Heart right ventricle (tissue), 16 donors: ENCODE measurements at regions of chr3 and their contacts with region 1.

Region 1: DNA sequence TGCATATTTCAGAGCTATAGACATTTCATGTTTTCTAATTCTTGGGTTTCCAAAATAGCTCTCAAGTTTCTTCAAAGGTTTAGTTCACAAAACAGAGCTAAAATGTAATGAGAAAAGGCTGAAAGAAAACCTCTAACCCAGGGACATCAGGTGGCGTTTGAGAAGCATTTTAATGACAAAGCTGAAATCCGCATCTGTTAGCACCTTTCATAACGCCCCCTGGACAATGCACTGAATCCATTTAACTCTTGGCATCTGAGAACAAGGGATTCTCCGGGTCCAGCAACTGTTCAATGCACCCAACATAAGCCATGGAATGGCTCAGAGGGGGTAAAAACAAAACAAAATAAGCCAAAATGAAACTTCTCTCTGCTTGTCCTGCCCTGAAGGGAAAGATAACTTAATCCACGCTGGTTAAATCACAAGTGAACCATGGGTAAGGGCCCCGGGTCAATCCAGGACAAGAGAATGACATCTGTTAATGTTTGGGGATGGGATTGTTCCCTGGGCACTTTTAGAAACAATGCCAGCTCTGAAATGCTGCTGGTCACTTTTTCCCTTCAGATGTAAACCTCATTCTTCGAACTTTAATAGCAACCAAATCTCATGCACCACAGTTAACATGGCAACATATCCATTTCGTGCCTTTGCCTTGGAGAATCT is 466.2 kb upstream of the ADAMTS9 start:
- DNase-seq: no peak
- ATAC-seq: no peak
- H3K4me3 ChIP-seq: no peak overlapping the region
- H3K27ac ChIP-seq: no peak overlapping the region
- H3K4me1 ChIP-seq: no peaks in the 10 kb centered on the region
- H3K27me3 ChIP-seq: no peaks in the 10 kb centered on the region
- CTCF ChIP-seq: no peak

Region 2: DNA sequence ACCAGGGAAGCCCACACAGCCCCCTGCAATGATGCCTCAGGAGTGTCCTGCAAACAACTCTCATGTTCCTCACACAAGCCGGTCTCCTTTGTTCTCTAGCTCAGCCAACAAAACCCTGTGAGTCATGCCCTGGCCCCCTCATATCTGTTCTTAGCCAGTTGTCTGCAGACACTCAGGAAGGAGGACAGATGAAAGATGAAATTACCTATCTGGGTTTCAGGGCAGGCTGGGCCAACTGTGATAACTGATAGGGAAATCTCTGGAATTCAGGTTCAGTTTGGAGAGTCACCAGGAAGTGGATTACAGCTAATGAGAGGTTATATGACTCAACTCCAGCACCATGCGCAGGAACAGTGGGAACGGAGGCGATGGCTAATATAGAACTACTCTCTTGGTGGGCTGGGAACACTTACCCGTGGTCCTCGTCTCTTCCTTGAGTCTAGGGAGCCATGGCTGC is 114.2 kb before region 1 on chr3:
- intact Hi-C with region 1: loop called in 1 of 10 experiments (anchors 10 kb)
- DNase-seq: no peak
- ATAC-seq: no peak
- H3K4me3 ChIP-seq: no peak overlapping the region
- H3K27ac ChIP-seq: no peak overlapping the region
- H3K4me1 ChIP-seq: peaks cover 0 to 6% (median 0%) of the 10 kb centered on the region in 9 donors
- H3K27me3 ChIP-seq: no peaks in the 10 kb centered on the region
- CTCF ChIP-seq: no peak

Region 3: GRCh38 chr3:65313666-65314065 is 159.7 kb after region 1 on chr3:
- intact Hi-C with region 1: no loop called
- DNase-seq: no peak
- ATAC-seq: no peak
- H3K4me3 ChIP-seq: no peak overlapping the region
- H3K27ac ChIP-seq: no peak overlapping the region
- H3K4me1 ChIP-seq: no peaks in the 10 kb centered on the region
- H3K27me3 ChIP-seq: no peaks in the 10 kb centered on the region
- CTCF ChIP-seq: no peak